B cell (primary cell): ENCODE measurements at regions of chr12 and their contacts with region 1.

Region 1: DNA sequence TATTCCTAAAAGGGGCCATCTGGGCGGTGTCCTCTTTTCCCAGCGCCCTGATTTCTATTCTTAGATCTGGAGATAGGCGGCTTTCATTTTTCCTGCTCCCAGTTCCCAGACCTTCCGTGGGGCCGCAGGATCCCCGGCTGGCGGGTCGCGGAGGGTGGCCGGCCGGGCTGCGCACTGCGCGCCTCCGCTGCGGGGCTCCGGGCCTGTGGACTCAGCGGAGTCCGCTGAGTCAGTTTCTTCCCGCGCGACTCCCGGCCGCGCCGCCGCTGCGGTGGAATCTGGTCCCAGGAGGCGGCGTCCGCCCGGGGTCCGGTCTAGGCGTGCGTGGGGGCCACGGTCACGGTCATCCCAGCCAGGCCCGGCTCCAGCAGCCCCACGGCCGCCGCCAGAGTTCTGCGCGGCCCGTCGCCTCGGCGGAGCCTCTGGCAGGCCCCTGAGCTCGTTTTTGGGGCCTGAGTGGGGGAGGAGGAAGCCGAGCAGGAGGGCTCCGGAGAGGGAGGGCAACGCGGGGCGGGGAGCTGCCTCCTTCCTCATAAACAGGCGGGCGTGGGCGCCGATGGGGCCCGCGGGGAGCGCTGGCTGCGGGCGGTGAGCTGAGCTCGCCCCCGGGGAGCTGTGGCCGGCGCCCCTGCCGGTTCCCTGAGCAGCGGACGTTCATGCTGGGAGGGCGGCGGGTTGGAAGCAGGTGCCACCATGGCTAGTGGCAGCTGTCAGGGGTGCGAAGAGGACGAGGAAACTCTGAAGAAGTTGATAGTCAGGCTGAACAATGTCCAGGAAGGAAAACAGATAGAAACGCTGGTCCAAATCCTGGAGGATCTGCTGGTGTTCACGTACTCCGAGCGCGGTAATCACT is at the start of gene LRRK2:
- DNase-seq: peak; percentile 94
- ATAC-seq: peak; percentile 81
- H3K4me3 ChIP-seq: peak within 1 kb of the TSS; percentile 63 to 99 (median 76)
- H3K4me3 Mint-ChIP-seq: peak within 1 kb of the TSS; percentile 94
- H3K27ac ChIP-seq: peak within 1 kb of the TSS; percentile 80 to 98
- H3K27ac Mint-ChIP-seq: peak within 1 kb of the TSS; percentile 97
- H3K4me1 ChIP-seq: peaks cover 36 to 46% of the 10 kb centered on the region in 2 donors
- H3K4me1 Mint-ChIP-seq: peaks cover 61% of the 10 kb centered on the region
- H3K27me3 ChIP-seq: no peaks in the 10 kb centered on the region
- H3K27me3 Mint-ChIP-seq: no peaks in the 10 kb centered on the region
- CTCF ChIP-seq: peak; percentile 9
- total RNA-seq, gene LRRK2: 56.5 and 60.2 TPM in 2 replicates

Region 2: GRCh38 chr12:39619660-39620433 is 604.8 kb before region 1 on chr12 and contains the start of gene ABCD2:
- CTCF ChIA-PET with region 1: no interaction called
- POLR2A ChIA-PET with region 1: no interaction called
- intact Hi-C with region 1: loop called (anchors 10 kb)
- DNase-seq: peak; percentile 89
- ATAC-seq: peak; percentile 85
- H3K4me3 ChIP-seq: peak within 1 kb of the TSS; percentile 54 to 78 (median 74)
- H3K4me3 Mint-ChIP-seq: no peak within 1 kb of the TSS
- H3K27ac ChIP-seq: peak within 1 kb of the TSS; percentile 87 to 88
- H3K27ac Mint-ChIP-seq: no peak within 1 kb of the TSS
- H3K4me1 ChIP-seq: peaks cover 27 to 29% of the 10 kb centered on the region in 2 donors
- H3K4me1 Mint-ChIP-seq: peaks cover 28% of the 10 kb centered on the region
- H3K27me3 ChIP-seq: no peaks in the 10 kb centered on the region
- H3K27me3 Mint-ChIP-seq: no peaks in the 10 kb centered on the region
- CTCF ChIP-seq: no peak
- total RNA-seq, gene ABCD2: 1.5 and 1.8 TPM in 2 replicates

Region 3: DNA sequence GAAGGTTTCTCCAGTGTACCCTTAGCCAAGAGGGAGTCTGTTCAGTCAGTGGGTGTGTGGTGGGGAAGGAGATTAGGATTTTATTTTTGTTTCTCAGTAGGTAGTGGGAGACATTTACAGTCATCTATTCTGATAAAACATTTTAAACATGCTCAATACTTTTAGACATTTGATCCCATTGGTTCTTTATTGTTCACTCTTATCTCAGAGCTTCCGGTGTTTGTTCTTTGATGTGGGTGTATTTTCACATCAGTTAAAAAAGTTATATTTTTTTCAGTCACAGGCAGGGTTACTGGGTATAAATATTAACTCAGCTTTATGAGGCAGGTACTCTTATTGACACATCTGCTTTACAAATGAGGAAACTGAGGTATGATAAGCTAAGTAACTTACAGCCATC is 43.2 kb before region 1 on chr12:
- CTCF ChIA-PET with region 1: no interaction called
- POLR2A ChIA-PET with region 1: no interaction called
- intact Hi-C with region 1: no loop called
- DNase-seq: no peak
- ATAC-seq: no peak
- H3K4me3 ChIP-seq: no peak overlapping the region
- H3K4me3 Mint-ChIP-seq: no peak overlapping the region
- H3K27ac ChIP-seq: no peak overlapping the region
- H3K27ac Mint-ChIP-seq: no peak overlapping the region
- H3K4me1 ChIP-seq: no peaks in the 10 kb centered on the region
- H3K4me1 Mint-ChIP-seq: no peaks in the 10 kb centered on the region
- H3K27me3 ChIP-seq: no peaks in the 10 kb centered on the region
- H3K27me3 Mint-ChIP-seq: no peaks in the 10 kb centered on the region
- CTCF ChIP-seq: no peak

Region 4: GRCh38 chr12:40192704-40193255 is 31.9 kb before region 1 on chr12:
- CTCF ChIA-PET with region 1: interaction called, 16 read pairs
- POLR2A ChIA-PET with region 1: interaction called, 30 read pairs
- intact Hi-C with region 1: loop called (anchors 1 kb)
- DNase-seq: peak; percentile 81
- ATAC-seq: peak; percentile 92
- H3K4me3 ChIP-seq: peak overlapping the region in 3 of 5 experiments; percentile 0 to 53 (median 22)
- H3K4me3 Mint-ChIP-seq: peak overlapping the region; percentile 78
- H3K27ac ChIP-seq: peak overlapping the region; percentile 71 to 88
- H3K27ac Mint-ChIP-seq: peak overlapping the region; percentile 93
- H3K4me1 ChIP-seq: peaks cover 31 to 32% of the 10 kb centered on the region in 2 donors
- H3K4me1 Mint-ChIP-seq: peaks cover 43% of the 10 kb centered on the region
- H3K27me3 ChIP-seq: no peaks in the 10 kb centered on the region
- H3K27me3 Mint-ChIP-seq: no peaks in the 10 kb centered on the region
- CTCF ChIP-seq: no peak

Region 5: DNA sequence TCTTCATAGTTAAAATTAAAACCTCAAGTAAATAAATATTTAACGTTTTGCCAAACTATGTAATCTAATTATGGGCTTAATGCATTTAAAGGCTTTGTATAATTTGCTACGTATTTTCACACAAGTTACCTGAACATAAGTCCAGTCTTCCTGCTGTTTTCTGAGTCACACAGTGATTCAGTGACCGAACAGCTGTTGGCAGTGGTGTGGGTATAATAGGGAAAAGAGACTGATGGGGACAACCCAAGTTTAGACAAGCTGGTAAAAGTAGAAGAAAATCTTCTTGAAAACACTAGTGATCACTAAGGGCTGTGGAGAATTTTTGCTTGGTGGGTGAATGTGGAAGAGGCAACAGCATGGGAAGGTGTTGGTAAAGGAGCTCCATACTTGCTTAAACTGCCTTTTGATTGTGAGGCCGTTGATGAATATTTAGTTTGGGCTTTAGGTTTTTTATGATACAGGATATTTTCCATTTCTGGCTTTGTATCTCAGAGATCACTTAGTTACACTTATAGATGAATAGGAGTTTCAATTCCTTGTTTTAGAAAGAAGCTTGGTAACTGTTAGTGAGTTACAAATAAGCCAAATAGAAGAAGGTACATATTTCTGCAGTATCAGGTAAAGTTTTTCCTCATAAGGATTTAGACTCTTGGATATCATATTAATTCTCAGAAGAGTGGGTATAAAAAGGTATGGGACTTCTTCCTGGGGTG is 24.1 kb after region 1 on chr12:
- CTCF ChIA-PET with region 1: interaction called, 8 read pairs
- POLR2A ChIA-PET with region 1: interaction called, 7 read pairs
- intact Hi-C with region 1: loop called (anchors 1 kb)
- DNase-seq: peak; percentile 40
- ATAC-seq: peak; percentile 54
- H3K4me3 ChIP-seq: peak overlapping the region in 1 of 5 experiments; percentile 21
- H3K4me3 Mint-ChIP-seq: peak overlapping the region; percentile 62
- H3K27ac ChIP-seq: peak overlapping the region; percentile 34 to 67
- H3K27ac Mint-ChIP-seq: peak overlapping the region; percentile 85
- H3K4me1 ChIP-seq: peaks cover 9 to 17% of the 10 kb centered on the region in 2 donors
- H3K4me1 Mint-ChIP-seq: peaks cover 27% of the 10 kb centered on the region
- H3K27me3 ChIP-seq: no peaks in the 10 kb centered on the region
- H3K27me3 Mint-ChIP-seq: no peaks in the 10 kb centered on the region
- CTCF ChIP-seq: no peak

Region 6: DNA sequence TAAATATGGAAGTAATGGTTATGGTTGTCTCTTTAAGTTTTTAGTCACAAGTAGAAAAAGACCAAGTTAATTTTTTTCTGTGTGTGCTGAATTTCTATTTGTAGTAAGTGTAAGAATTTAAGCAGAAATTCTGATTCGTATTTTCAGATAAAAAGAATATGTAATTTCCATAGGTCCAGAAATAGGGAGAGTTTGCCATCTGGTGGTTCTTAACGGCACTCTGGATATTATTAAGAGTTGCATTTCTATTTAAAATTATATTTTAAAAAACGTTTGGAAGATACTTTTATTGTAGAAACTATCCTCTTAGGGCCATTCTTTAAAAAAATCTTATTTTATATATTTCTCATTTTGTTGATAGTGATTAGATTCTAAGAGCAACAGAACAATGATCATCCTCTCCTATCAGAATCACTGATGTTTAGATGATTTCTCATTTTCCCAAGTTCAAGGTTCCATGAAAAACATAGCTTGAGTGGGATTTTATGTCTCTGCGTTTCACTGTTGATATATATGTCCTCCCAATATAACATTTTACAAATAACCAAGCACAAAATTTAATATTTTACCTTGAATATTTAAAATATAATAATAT is 88.4 kb after region 1 on chr12:
- CTCF ChIA-PET with region 1: interaction called, 11 read pairs
- POLR2A ChIA-PET with region 1: no interaction called
- intact Hi-C with region 1: loop called (anchors 2 kb)
- DNase-seq: peak; percentile 51
- ATAC-seq: no peak
- H3K4me3 ChIP-seq: no peak overlapping the region
- H3K4me3 Mint-ChIP-seq: no peak overlapping the region
- H3K27ac ChIP-seq: peak overlapping the region in 1 of 2 donors; percentile 13
- H3K27ac Mint-ChIP-seq: no peak overlapping the region
- H3K4me1 ChIP-seq: peaks cover 13 to 15% of the 10 kb centered on the region in 2 donors
- H3K4me1 Mint-ChIP-seq: peaks cover 26% of the 10 kb centered on the region
- H3K27me3 ChIP-seq: no peaks in the 10 kb centered on the region
- H3K27me3 Mint-ChIP-seq: no peaks in the 10 kb centered on the region
- CTCF ChIP-seq: peak; percentile 78